ENCODE measurements at regions of chr18 and their contacts with region 1.

Region 1: GRCh38 chr18:57561728-57562423 is 24.6 kb downstream of the FECH start:
- DNase-seq: peak; percentile 40 to 63 (median 55)
- ATAC-seq: peak; percentile 77
- H3K4me3 ChIP-seq: no peak overlapping the region
- H3K27ac ChIP-seq: no peak overlapping the region
- H3K4me1 ChIP-seq: no peaks in the 10 kb centered on the region
- H3K27me3 ChIP-seq: no peaks in the 10 kb centered on the region
- CTCF ChIP-seq: peak; percentile 44 to 69 (median 66); a peak in 5 of 6 replicates
- EP300 ChIP-seq: no peak
- POLR2A ChIP-seq: no peak
- RAD21 ChIP-seq: peak; percentile 67 to 69

Region 2: DNA sequence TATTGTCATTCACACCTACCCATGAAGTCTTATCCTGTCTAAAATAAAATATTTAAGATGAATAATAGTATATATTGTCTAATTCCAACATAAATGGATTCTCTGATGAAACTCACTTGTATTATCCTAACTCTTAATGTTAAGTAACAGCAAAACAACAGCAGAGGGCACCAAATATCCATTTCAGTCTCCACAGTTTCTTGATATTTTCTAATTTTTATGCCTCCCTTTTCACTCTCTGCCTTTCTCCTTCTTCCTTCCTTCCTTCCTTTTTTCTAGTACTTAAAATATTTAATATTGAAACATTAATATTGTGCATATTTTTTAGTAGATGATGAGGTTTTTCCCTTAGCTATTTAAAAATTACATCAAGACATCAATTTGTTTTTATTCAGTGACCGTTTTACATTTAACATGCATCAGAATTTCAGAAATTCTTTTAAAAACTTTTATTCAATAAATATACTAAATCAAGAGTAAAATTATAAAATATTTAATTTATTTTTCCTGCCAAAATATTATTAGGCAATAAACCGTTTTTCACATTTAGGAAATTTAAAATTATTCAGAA is 813.1 kb before region 1 on chr18:
- CTCF ChIA-PET with region 1: interaction called, 7 read pairs
- POLR2A ChIA-PET with region 1: no interaction called
- in situ Hi-C with region 1: no loop called
- intact Hi-C with region 1: loop called (anchors 5 kb)
- DNase-seq: peak; percentile 6 to 38 (median 10)
- ATAC-seq: no peak
- H3K4me3 ChIP-seq: no peak overlapping the region
- H3K27ac ChIP-seq: no peak overlapping the region
- H3K4me1 ChIP-seq: no peaks in the 10 kb centered on the region
- H3K27me3 ChIP-seq: no peaks in the 10 kb centered on the region
- CTCF ChIP-seq: peak in 1 of 3 experiments; percentile 57; a peak in 3 of 6 replicates
- EP300 ChIP-seq: no peak
- POLR2A ChIP-seq: no peak
- RAD21 ChIP-seq: peak; percentile 61 to 65

Region 3: GRCh38 chr18:56869189-56869777 is 692.6 kb before region 1 on chr18:
- CTCF ChIA-PET with region 1: no interaction called
- POLR2A ChIA-PET with region 1: no interaction called
- in situ Hi-C with region 1: no loop called
- intact Hi-C with region 1: loop called (anchors 10 kb)
- DNase-seq: peak; percentile 4 to 32 (median 5)
- ATAC-seq: peak; percentile 49; the same call in 1 of the 3 replicates
- H3K4me3 ChIP-seq: no peak overlapping the region
- H3K27ac ChIP-seq: no peak overlapping the region
- H3K4me1 ChIP-seq: no peaks in the 10 kb centered on the region
- H3K27me3 ChIP-seq: no peaks in the 10 kb centered on the region
- CTCF ChIP-seq: peak; percentile 28 to 68 (median 58); a peak in 5 of 6 replicates
- EP300 ChIP-seq: no peak
- POLR2A ChIP-seq: no peak
- RAD21 ChIP-seq: peak; percentile 65 to 66

Measured in K562 (cell line).